Activated CD4-positive, alpha-beta memory T cell treated with anti-CD3 and anti-CD28 coated beads for 36 hours (primary cell): ENCODE measurements at regions of chr2 and their contacts with region 1.

Region 1: GRCh38 chr2:55590810-55591440 is 26.5 kb downstream of the PPP4R3B start:
- DNase-seq: no peak
- H3K4me3 Mint-ChIP-seq: no peak overlapping the region
- H3K27ac Mint-ChIP-seq: peak overlapping the region; percentile 33
- H3K4me1 Mint-ChIP-seq: peaks cover 32% of the 10 kb centered on the region
- H3K27me3 Mint-ChIP-seq: no peaks in the 10 kb centered on the region

Region 2: DNA sequence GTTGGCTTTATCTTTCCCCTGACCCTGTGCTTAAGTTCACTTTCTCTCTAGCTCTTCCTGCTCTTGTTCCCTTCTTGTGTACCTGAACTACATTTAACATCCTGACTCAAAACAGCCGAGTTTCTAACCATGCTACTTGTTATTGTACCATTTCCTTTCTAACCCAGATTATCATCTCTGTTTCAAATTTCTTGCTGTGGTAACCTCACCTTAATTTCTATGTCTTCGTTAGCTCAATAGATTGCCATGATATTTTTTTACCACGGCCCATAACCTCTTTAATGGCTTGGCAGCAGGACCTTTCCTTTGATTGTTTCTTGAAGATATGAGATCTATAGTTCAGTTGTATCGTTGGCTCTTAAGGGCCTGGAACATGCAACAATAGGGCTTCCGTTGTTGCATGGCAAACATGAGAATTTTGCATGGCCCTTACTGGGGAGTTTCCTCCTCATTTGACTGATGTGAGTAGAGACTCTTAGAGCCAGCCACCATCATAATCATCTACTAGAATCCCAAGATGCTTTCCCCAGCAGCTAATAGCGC is 60.3 kb before region 1 on chr2:
- CTCF ChIA-PET with region 1: no interaction called
- POLR2A ChIA-PET with region 1: no interaction called
- intact Hi-C with region 1: loop called (anchors 5 kb)
- DNase-seq: peak; percentile 30
- H3K4me3 Mint-ChIP-seq: peak overlapping the region; percentile 1
- H3K27ac Mint-ChIP-seq: peak overlapping the region; percentile 83
- H3K4me1 Mint-ChIP-seq: peaks cover 22% of the 10 kb centered on the region
- H3K27me3 Mint-ChIP-seq: no peaks in the 10 kb centered on the region

Region 3: GRCh38 chr2:55575591-55575990 is 15.3 kb before region 1 on chr2:
- CTCF ChIA-PET with region 1: no interaction called
- POLR2A ChIA-PET with region 1: no interaction called
- intact Hi-C with region 1: no loop called
- DNase-seq: no peak
- H3K4me3 Mint-ChIP-seq: no peak overlapping the region
- H3K27ac Mint-ChIP-seq: no peak overlapping the region
- H3K4me1 Mint-ChIP-seq: peaks cover 2% of the 10 kb centered on the region
- H3K27me3 Mint-ChIP-seq: no peaks in the 10 kb centered on the region

Region 4: GRCh38 chr2:55653251-55653650 is 62.3 kb after region 1 on chr2:
- CTCF ChIA-PET with region 1: no interaction called
- POLR2A ChIA-PET with region 1: no interaction called
- intact Hi-C with region 1: no loop called
- DNase-seq: no peak
- H3K4me3 Mint-ChIP-seq: no peak overlapping the region
- H3K27ac Mint-ChIP-seq: no peak overlapping the region
- H3K4me1 Mint-ChIP-seq: no peaks in the 10 kb centered on the region
- H3K27me3 Mint-ChIP-seq: no peaks in the 10 kb centered on the region